ENCODE measurements at regions of chrX and their contacts with region 1.

Region 1: GRCh38 chrX:47540754-47541538 is 20.1 kb upstream of the ARAF start:
- DNase-seq: no peak
- ATAC-seq: peak; percentile 61
- H3K4me3 ChIP-seq: no peak overlapping the region
- H3K4me3 Mint-ChIP-seq: no peak overlapping the region
- H3K27ac ChIP-seq: no peak overlapping the region
- H3K27ac Mint-ChIP-seq: no peak overlapping the region
- H3K4me1 ChIP-seq: no peaks in the 10 kb centered on the region
- H3K4me1 Mint-ChIP-seq: peaks cover 0 to 3% (median 0%) of the 10 kb centered on the region in 7 donors
- H3K27me3 ChIP-seq: no peaks in the 10 kb centered on the region
- H3K27me3 Mint-ChIP-seq: no peaks in the 10 kb centered on the region

Region 2: DNA sequence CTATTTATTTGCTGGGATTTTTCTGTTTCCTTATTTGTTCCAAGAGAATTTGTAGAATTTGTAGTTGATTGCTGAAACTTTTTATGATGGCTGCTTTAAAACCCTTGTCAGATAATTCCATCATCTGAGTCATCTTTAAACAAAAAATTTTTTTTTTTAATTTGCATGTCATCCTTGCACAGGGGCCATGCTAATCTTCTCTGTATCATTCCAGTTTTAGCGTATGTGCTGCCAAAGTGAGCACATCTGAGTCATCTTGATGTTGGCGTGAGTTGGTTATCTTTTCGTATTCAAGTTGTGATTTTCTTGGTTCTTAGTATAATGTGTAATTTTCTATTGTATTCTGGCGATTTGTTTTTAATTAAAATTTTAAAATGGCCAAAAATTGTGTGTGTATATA is 189.2 kb before region 1 on chrX:
- CTCF ChIA-PET with region 1: no interaction called
- POLR2A ChIA-PET with region 1: no interaction called
- intact Hi-C with region 1: no loop called
- DNase-seq: no peak
- ATAC-seq: no peak
- H3K4me3 ChIP-seq: no peak overlapping the region
- H3K4me3 Mint-ChIP-seq: no peak overlapping the region
- H3K27ac ChIP-seq: no peak overlapping the region
- H3K27ac Mint-ChIP-seq: no peak overlapping the region
- H3K4me1 ChIP-seq: no peaks in the 10 kb centered on the region
- H3K4me1 Mint-ChIP-seq: no peaks in the 10 kb centered on the region
- H3K27me3 ChIP-seq: no peaks in the 10 kb centered on the region
- H3K27me3 Mint-ChIP-seq: no peaks in the 10 kb centered on the region

Region 3: DNA sequence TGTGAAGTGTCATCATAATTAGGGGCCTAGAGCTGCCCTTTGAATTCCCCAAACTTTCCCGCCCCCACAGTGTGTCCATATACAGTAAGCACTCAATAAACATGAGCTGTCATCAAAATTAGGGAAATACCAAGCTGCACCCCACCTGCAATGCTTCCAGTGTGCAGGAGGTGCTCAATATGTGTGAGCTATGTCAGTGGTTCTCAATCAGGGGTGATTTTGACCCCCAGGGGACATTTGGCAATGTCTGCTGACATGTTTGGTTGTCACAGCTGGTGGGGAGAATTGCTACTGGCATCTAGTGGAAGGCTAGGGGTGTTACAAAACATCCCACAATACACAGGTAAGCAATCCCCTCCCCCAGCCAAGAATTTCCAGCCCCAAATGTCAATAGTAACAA is 88.0 kb after region 1 on chrX:
- CTCF ChIA-PET with region 1: interaction called, 6 read pairs
- POLR2A ChIA-PET with region 1: no interaction called
- intact Hi-C with region 1: loop called in 1 of 2 experiments (anchors 1 kb)
- DNase-seq: peak in 4 of 9 donors; percentile 14 to 35 (median 30)
- ATAC-seq: peak; percentile 33
- H3K4me3 ChIP-seq: peak overlapping the region; percentile 33
- H3K4me3 Mint-ChIP-seq: peak overlapping the region; percentile 83 to 95 (median 90)
- H3K27ac ChIP-seq: peak overlapping the region; percentile 64
- H3K27ac Mint-ChIP-seq: peak overlapping the region; percentile 72 to 95 (median 89)
- H3K4me1 ChIP-seq: peaks cover 0 to 3% of the 10 kb centered on the region in 2 donors
- H3K4me1 Mint-ChIP-seq: peaks cover 0 to 34% (median 28%) of the 10 kb centered on the region in 7 donors
- H3K27me3 ChIP-seq: no peaks in the 10 kb centered on the region
- H3K27me3 Mint-ChIP-seq: peaks cover 0 to 3% (median 0%) of the 10 kb centered on the region in 5 donors

Region 4: DNA sequence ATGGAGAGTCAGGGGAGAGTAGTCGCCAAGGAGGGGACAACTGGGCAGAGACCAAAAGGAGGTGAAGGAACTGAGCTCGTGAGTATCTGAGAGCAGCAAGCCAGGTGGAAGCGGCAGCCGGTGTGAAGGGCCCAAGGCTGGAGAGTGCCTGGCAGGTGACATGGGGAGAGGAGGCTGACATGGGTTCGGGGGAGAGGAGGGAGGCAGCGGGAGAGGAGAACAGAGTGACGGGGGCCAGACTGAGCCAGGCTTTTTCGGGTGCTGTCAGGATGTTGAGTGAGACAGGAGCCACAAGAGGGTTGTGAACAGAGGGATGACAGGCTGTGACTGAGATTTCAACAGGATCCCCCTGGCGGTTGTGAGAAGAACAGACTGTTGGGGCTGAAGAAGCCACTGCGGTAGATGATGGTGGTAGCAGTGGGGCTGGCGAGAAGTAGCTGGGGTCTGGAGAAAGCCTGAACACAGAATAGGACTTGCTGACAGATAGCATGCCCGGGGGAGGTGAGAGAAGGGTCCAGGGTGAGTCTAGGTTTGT is 103.7 kb after region 1 on chrX:
- CTCF ChIA-PET with region 1: no interaction called
- POLR2A ChIA-PET with region 1: interaction called, 5 read pairs
- intact Hi-C with region 1: loop called in 1 of 2 experiments (anchors 1 kb)
- DNase-seq: no peak
- ATAC-seq: peak; percentile 60
- H3K4me3 ChIP-seq: no peak overlapping the region
- H3K4me3 Mint-ChIP-seq: peak overlapping the region in 2 of 10 donors; percentile 36 to 39
- H3K27ac ChIP-seq: peak overlapping the region; percentile 21
- H3K27ac Mint-ChIP-seq: peak overlapping the region in 3 of 9 donors; percentile 37 to 56 (median 51)
- H3K4me1 ChIP-seq: peaks cover 9 to 22% of the 10 kb centered on the region in 2 donors
- H3K4me1 Mint-ChIP-seq: peaks cover 31 to 64% (median 51%) of the 10 kb centered on the region in 7 donors
- H3K27me3 ChIP-seq: no peaks in the 10 kb centered on the region
- H3K27me3 Mint-ChIP-seq: no peaks in the 10 kb centered on the region

Region 5: GRCh38 chrX:47751670-47752069 is 210.7 kb after region 1 on chrX:
- CTCF ChIA-PET with region 1: no interaction called
- POLR2A ChIA-PET with region 1: no interaction called
- intact Hi-C with region 1: loop called in 1 of 2 experiments (anchors 1 kb)
- DNase-seq: peak in 5 of 9 donors; percentile 0 to 28 (median 13)
- ATAC-seq: peak; percentile 42
- H3K4me3 ChIP-seq: no peak overlapping the region
- H3K4me3 Mint-ChIP-seq: no peak overlapping the region
- H3K27ac ChIP-seq: no peak overlapping the region
- H3K27ac Mint-ChIP-seq: peak overlapping the region in 1 of 9 donors; percentile 15
- H3K4me1 ChIP-seq: no peaks in the 10 kb centered on the region
- H3K4me1 Mint-ChIP-seq: peaks cover 0 to 3% (median 0%) of the 10 kb centered on the region in 7 donors
- H3K27me3 ChIP-seq: no peaks in the 10 kb centered on the region
- H3K27me3 Mint-ChIP-seq: peaks cover 0 to 4% (median 0%) of the 10 kb centered on the region in 5 donors